ENCODE measurements at regions of chr19 and their contacts with region 1.

Region 1: GRCh38 chr19:20776083-20777076 is at the start of gene ZNF66:
- DNase-seq: peak; percentile 87 to 98 (median 93)
- ATAC-seq: peak; percentile 97 to 99 (median 98)
- H3K4me3 ChIP-seq: peak within 1 kb of the TSS; percentile 91 to 97
- H3K4me3 Mint-ChIP-seq: peak within 1 kb of the TSS; percentile 98 to 100 (median 99)
- H3K27ac ChIP-seq: peak within 1 kb of the TSS; percentile 85
- H3K27ac Mint-ChIP-seq: peak within 1 kb of the TSS; percentile 93 to 97
- H3K4me1 ChIP-seq: peaks cover 2 to 13% of the 10 kb centered on the region in 2 experiments
- H3K4me1 Mint-ChIP-seq: peaks cover 19 to 24% (median 23%) of the 10 kb centered on the region in 3 donors
- H3K27me3 ChIP-seq: no peaks in the 10 kb centered on the region
- H3K27me3 Mint-ChIP-seq: no peaks in the 10 kb centered on the region
- total RNA-seq, gene ZNF66: 9.3 to 13.1 (median 11.4) TPM

Region 2: GRCh38 chr19:20416661-20417060 is 359.7 kb before region 1 on chr19:
- CTCF ChIA-PET with region 1: no interaction called
- POLR2A ChIA-PET with region 1: interaction called in 1 of 2 experiments, 10 read pairs
- DNase-seq: no peak
- ATAC-seq: no peak
- H3K4me3 ChIP-seq: no peak overlapping the region
- H3K4me3 Mint-ChIP-seq: no peak overlapping the region
- H3K27ac ChIP-seq: no peak overlapping the region
- H3K27ac Mint-ChIP-seq: no peak overlapping the region
- H3K4me1 ChIP-seq: no peaks in the 10 kb centered on the region
- H3K4me1 Mint-ChIP-seq: peaks cover 0 to 4% (median 2%) of the 10 kb centered on the region in 3 donors
- H3K27me3 ChIP-seq: no peaks in the 10 kb centered on the region
- H3K27me3 Mint-ChIP-seq: no peaks in the 10 kb centered on the region

Region 3: DNA sequence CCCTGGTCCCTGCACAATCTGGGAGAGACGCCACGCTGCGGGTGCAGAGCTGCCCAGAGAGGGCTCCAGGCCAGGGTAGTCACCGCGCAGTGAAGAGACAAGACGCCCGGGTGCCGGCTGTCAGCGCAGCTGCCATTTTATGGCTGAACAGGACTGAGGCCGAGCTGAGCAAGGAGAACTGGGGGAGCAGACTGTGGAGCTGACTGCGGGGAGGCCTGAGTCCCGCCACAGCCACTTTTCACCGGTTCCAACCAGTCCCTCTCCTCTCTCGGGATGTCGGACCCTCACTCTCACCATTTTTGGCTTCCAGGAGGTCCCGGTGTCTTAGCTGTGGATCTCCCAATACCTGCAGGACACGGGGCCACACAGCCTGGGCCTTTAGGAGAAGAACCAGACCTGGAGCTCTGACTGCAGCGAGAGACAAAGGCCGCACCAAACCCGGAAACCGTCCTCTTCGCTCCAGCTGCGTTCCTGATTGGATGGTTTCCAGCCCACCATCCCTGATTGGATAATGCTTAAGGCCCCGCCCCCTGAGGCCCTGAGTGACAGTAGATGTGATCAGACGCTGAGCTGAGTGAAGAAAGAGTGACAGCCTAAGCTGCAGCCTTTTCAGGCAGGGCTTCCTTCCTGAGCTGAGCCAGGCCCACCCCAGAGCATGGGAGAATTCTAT is 115.1 kb before region 1 on chr19 and contains the start of gene ZNF626:
- CTCF ChIA-PET with region 1: interaction called in 1 of 2 experiments, 3 read pairs
- POLR2A ChIA-PET with region 1: interaction called in 1 of 2 experiments, 10 read pairs
- DNase-seq: peak; percentile 81 to 97 (median 91)
- ATAC-seq: peak; percentile 98 to 99 (median 98)
- H3K4me3 ChIP-seq: peak within 1 kb of the TSS; percentile 74 to 87
- H3K4me3 Mint-ChIP-seq: peak within 1 kb of the TSS; percentile 89 to 95 (median 91)
- H3K27ac ChIP-seq: peak within 1 kb of the TSS; percentile 80
- H3K27ac Mint-ChIP-seq: peak within 1 kb of the TSS; percentile 92 to 96
- H3K4me1 ChIP-seq: peaks cover 0 to 30% of the 10 kb centered on the region in 2 experiments
- H3K4me1 Mint-ChIP-seq: peaks cover 17 to 60% (median 54%) of the 10 kb centered on the region in 3 donors
- H3K27me3 ChIP-seq: no peaks in the 10 kb centered on the region
- H3K27me3 Mint-ChIP-seq: no peaks in the 10 kb centered on the region
- total RNA-seq, gene ZNF626: 5.6 to 12.1 (median 9.7) TPM

Region 4: DNA sequence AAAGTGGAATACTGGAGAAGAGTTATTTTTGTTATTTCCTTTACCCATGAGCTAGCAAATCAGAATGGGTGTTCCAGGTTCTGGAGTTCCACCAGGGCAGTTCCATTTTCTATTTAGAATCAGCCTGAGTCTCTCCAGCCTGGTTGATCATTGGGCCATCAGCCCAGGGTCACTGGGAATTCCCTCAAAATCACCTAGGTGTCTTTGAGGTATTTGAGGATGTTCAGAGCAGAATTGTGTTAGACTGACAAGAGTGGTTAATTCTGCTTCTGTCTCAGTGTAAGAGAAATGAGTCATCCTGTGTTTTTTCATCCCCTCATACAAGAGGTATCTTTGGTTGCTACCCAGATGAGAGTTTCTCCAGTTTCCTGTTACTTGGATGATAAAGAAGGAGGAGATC is 11.4 kb after region 1 on chr19:
- CTCF ChIA-PET with region 1: no interaction called
- POLR2A ChIA-PET with region 1: interaction called in 1 of 2 experiments, 10 read pairs
- DNase-seq: no peak
- ATAC-seq: no peak
- H3K4me3 ChIP-seq: no peak overlapping the region
- H3K4me3 Mint-ChIP-seq: no peak overlapping the region
- H3K27ac ChIP-seq: no peak overlapping the region
- H3K27ac Mint-ChIP-seq: no peak overlapping the region
- H3K4me1 ChIP-seq: no peaks in the 10 kb centered on the region
- H3K4me1 Mint-ChIP-seq: peaks cover 0 to 3% (median 3%) of the 10 kb centered on the region in 3 donors
- H3K27me3 ChIP-seq: no peaks in the 10 kb centered on the region
- H3K27me3 Mint-ChIP-seq: no peaks in the 10 kb centered on the region

Region 5: GRCh38 chr19:20923077-20923871 is 146.9 kb after region 1 on chr19 and contains the start of gene ZNF85:
- CTCF ChIA-PET with region 1: interaction called in 1 of 2 experiments, 5 read pairs
- POLR2A ChIA-PET with region 1: interaction called in 1 of 2 experiments, 13 read pairs
- DNase-seq: peak; percentile 78 to 97 (median 91)
- ATAC-seq: peak; percentile 98 to 99 (median 99)
- H3K4me3 ChIP-seq: peak within 1 kb of the TSS; percentile 75 to 85
- H3K4me3 Mint-ChIP-seq: peak within 1 kb of the TSS; percentile 94 to 95 (median 95)
- H3K27ac ChIP-seq: peak within 1 kb of the TSS; percentile 82
- H3K27ac Mint-ChIP-seq: peak within 1 kb of the TSS; percentile 86 to 87
- H3K4me1 ChIP-seq: peaks cover 8 to 12% of the 10 kb centered on the region in 2 experiments
- H3K4me1 Mint-ChIP-seq: peaks cover 12 to 23% (median 14%) of the 10 kb centered on the region in 3 donors
- H3K27me3 ChIP-seq: no peaks in the 10 kb centered on the region
- H3K27me3 Mint-ChIP-seq: no peaks in the 10 kb centered on the region
- total RNA-seq, gene ZNF85: 4.6 to 10.5 (median 6.1) TPM

Measured in T-cell (primary cell).